Right ventricle myocardium superior (tissue), 1 donor: ENCODE measurements at regions of chr2 and their contacts with region 1.

Region 1: GRCh38 chr2:135004005-135004746 is 43.1 kb downstream of the MAP3K19 start:
- DNase-seq: peak; percentile 78
- ATAC-seq: peak; percentile 99

Region 2: DNA sequence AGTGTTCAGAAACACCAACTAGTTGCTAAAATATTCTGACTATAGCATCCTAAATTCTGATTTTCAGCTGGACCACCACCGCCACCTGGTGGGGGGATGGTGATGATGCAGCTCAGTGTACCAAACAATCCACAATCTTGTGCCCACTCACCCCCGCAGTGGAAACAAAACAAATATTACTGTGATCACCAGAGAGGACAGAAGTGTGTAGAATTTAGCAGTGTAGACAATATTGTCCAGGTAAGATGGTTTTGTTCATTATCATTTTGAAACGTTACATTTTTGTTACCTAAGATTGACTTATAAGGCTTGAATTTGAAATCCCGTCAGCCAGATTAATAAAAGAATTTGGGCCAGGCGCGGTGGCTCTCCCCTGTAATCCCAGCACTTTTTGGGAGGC is 705.8 kb after region 1 on chr2:
- intact Hi-C with region 1: loop called (anchors 5 kb)
- DNase-seq: peak; percentile 61
- ATAC-seq: no peak

Region 3: DNA sequence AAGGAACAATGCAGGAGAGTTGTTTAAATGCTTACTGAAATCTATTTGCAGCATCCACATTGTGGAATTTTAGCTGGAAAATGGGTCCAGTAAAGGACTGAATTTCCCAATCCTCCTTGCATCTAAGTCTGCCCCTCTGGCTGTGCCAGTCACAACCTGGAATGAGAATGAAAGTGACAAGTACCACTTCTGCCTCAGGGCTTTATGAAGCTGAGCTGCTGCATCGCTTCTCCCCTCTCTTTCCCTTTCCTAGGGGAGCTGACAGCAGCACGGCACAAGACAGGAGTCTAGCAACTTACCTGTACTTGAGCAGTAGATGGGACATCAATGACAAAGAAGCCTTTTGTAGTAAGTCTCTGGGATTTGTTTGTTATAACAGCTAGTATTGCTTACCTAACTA is 1733.9 kb after region 1 on chr2:
- intact Hi-C with region 1: no loop called
- DNase-seq: no peak
- ATAC-seq: no peak